HCT116 (cell line): ENCODE measurements at regions of chr11 and their contacts with region 1.

Region 1: DNA sequence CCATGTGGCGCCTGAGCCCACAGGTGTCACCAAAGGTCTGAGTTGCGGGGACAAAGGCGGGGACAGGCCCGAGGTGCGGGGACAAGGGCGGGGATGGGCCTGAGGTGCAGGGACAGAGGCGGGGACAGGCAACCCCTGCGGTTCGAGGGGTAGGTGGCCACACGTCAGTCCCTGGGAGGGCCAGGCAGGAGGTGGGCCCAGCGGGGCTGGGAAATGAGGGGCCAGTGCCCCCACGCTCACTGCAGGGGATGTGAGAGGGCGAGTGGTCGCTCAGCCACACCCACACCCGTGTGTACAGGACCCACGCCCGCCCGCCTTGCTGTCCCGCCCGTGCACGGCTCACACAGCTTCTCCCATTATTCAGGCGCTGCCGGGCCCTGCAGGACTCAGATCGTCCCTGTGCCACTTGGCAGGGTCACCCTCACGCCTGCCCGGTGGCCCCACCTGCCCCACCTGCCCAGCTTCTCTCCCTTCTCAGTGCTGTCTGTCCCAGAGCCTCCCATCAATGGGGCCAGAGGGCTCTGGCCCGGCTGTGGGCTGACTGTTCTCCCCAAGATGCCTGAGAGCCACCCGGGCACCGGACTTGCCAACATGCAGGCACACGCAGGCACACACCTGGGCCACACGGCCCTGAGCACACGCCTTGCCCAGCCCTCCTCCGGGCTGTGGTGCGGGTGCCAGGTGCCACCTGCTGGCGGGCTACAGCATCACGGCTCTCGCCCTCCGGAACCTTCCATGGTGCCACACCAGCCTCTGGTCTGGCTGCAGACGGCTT is 14.2 kb upstream of the MUC6 start:
- DNase-seq: peak; percentile 48
- ATAC-seq: peak; percentile 99
- H3K4me3 ChIP-seq: no peak overlapping the region
- H3K27ac ChIP-seq: peak overlapping the region; percentile 13; the same call in 1 of the 2 replicates
- H3K4me1 ChIP-seq: peaks cover 3 to 18% of the 10 kb centered on the region in 2 experiments; a peak in 3 of 4 replicates
- H3K27me3 ChIP-seq: no peaks in the 10 kb centered on the region
- CTCF ChIP-seq: peak; percentile 91 to 94 (median 92)
- POLR2A ChIP-seq: no peak
- RAD21 ChIP-seq: peak; percentile 100

Region 2: DNA sequence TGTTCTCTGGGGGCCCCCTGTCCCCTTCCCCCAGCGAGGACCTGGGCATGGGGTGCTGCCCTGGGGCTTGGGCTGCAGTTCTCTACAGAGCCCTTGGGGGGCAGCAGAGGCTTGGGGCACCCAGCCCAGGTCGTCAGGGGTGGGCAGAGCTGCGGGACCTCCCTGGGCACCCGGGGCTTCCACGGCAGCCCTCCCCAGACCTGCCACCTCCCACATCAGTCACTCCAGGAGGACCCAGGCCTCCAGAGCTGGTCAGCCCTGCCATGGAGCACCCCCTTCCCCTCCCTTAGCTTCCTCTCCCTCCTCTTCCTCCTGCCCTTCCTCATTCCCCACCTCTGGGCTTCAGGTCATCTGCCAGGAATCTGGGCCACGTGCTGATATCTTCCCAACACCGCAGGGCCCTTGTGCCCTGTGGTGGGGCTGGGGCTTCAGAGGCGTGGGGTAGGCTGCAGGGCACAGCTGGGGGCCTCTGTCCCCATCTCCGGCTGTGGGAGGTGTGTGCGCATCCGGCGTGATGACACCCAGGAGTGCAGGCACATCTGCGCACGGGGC is 202.3 kb before region 1 on chr11:
- CTCF ChIA-PET with region 1: interaction called, 3 read pairs
- POLR2A ChIA-PET with region 1: no interaction called
- RAD21 ChIA-PET with region 1: interaction called in 1 of 2 experiments, 4 read pairs
- intact Hi-C with region 1: loop called (anchors 1 kb)
- DNase-seq: no peak
- ATAC-seq: peak; percentile 50
- H3K4me3 ChIP-seq: no peak overlapping the region
- H3K27ac ChIP-seq: peak overlapping the region; percentile 0; the same call in 1 of the 2 replicates
- H3K4me1 ChIP-seq: peaks cover 17 to 39% of the 10 kb centered on the region in 2 experiments
- H3K27me3 ChIP-seq: no peaks in the 10 kb centered on the region
- CTCF ChIP-seq: peak in 2 of 3 experiments; percentile 76 to 94; a peak in 4 of 6 replicates
- POLR2A ChIP-seq: no peak
- RAD21 ChIP-seq: no peak

Region 3: DNA sequence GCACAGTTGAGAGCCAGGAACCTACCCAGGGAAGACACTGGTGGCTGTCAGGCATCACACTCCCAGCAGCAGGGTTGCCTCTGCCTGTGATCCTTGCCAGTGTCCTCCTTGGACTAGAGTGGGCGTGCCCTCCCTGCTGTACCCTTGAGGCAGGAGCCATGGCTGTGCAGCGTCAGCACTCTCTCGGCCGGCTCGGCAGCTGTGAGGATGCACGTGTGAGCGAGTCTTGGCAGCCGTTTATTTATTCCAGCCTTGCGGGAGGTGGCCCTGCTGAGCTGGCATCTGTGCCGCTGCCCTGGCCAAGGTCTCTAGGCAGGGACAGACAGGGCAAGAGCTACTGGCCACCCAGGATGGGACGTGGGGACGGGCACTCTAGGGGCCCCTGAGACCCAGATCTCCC is 174.2 kb before region 1 on chr11:
- CTCF ChIA-PET with region 1: no interaction called
- POLR2A ChIA-PET with region 1: no interaction called
- RAD21 ChIA-PET with region 1: no interaction called
- intact Hi-C with region 1: loop called (anchors 10 kb)
- DNase-seq: no peak
- ATAC-seq: no peak
- H3K4me3 ChIP-seq: no peak overlapping the region
- H3K27ac ChIP-seq: no peak overlapping the region
- H3K4me1 ChIP-seq: peaks cover 2 to 24% of the 10 kb centered on the region in 2 experiments; a peak in 3 of 4 replicates
- H3K27me3 ChIP-seq: no peaks in the 10 kb centered on the region
- CTCF ChIP-seq: no peak
- POLR2A ChIP-seq: no peak
- RAD21 ChIP-seq: no peak

Region 4: GRCh38 chr11:898143-898511 is 152.6 kb before region 1 on chr11:
- CTCF ChIA-PET with region 1: interaction called, 6 read pairs
- POLR2A ChIA-PET with region 1: no interaction called
- RAD21 ChIA-PET with region 1: no interaction called
- intact Hi-C with region 1: loop called (anchors 2 kb)
- DNase-seq: peak; percentile 13
- ATAC-seq: peak; percentile 77
- H3K4me3 ChIP-seq: no peak overlapping the region
- H3K27ac ChIP-seq: no peak overlapping the region
- H3K4me1 ChIP-seq: peaks cover 5 to 7% of the 10 kb centered on the region in 2 experiments; a peak in 3 of 4 replicates
- H3K27me3 ChIP-seq: no peaks in the 10 kb centered on the region
- CTCF ChIP-seq: peak; percentile 24 to 48 (median 42); a peak in 4 of 6 replicates
- POLR2A ChIP-seq: no peak
- RAD21 ChIP-seq: peak; percentile 50

Region 5: DNA sequence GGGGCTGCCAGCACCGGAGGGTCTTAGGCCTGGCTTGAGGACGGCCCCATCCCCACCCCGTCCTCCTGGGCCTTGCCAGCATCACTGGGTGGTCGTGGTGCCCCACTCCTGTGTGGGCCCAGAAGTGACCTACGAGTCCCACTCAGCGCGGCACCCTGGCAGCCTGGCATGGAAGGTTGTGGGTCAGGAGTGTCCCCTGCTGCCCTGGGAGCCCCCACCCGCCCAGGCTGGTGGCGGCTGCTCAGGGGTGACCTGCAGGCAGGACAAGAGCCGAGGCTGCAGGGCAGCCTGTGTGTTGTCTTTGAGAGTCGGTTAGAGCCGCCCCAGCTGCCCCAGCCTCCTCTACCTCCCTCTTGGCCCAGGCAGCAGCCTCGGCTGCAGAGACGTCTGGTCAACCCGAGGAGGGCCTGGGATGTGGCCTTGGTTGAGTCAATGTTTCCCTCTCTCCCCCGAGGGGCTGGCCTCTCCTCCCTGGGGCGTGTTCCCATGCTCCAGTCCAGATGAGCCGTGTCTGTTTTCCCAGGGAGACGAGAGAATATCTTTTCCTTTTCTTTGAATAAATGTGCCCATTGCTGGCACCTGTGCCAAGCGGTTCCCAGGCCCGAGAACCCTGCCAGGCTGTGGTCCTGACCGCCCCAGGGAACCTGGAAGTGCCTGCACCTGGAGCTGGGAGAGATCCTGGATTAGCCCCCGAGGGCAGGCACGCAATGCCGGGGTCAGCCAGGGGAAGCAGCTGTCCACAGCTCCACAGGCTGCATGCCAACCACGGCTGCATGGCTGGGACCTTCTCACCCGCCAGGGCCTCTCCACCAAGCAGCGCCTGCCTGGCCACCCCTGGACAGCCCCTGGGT is 71.3 kb after region 1 on chr11:
- CTCF ChIA-PET with region 1: no interaction called
- POLR2A ChIA-PET with region 1: no interaction called
- RAD21 ChIA-PET with region 1: no interaction called
- intact Hi-C with region 1: no loop called
- DNase-seq: no peak
- ATAC-seq: no peak
- H3K4me3 ChIP-seq: no peak overlapping the region
- H3K27ac ChIP-seq: no peak overlapping the region
- H3K4me1 ChIP-seq: no peaks in the 10 kb centered on the region
- H3K27me3 ChIP-seq: peaks cover 11% of the 10 kb centered on the region
- CTCF ChIP-seq: no peak
- POLR2A ChIP-seq: no peak
- RAD21 ChIP-seq: no peak